ENCODE measurements at regions of chr10 and their contacts with region 1.

Region 1: GRCh38 chr10:3785257-3785850 is 345 bp upstream of the KLF6 start:
- DNase-seq: peak; percentile 100
- H3K4me3 ChIP-seq: peak overlapping the region; percentile 66 to 97 (median 87)
- H3K27ac ChIP-seq: peak overlapping the region; percentile 97 to 100 (median 99)
- H3K4me1 ChIP-seq: peaks cover 15 to 29% (median 23%) of the 10 kb centered on the region in 4 donors
- H3K27me3 ChIP-seq: no peaks in the 10 kb centered on the region
- CTCF ChIP-seq: no peak
- EP300 ChIP-seq: no peak
- POLR2A ChIP-seq: peak; percentile 99

Region 2: DNA sequence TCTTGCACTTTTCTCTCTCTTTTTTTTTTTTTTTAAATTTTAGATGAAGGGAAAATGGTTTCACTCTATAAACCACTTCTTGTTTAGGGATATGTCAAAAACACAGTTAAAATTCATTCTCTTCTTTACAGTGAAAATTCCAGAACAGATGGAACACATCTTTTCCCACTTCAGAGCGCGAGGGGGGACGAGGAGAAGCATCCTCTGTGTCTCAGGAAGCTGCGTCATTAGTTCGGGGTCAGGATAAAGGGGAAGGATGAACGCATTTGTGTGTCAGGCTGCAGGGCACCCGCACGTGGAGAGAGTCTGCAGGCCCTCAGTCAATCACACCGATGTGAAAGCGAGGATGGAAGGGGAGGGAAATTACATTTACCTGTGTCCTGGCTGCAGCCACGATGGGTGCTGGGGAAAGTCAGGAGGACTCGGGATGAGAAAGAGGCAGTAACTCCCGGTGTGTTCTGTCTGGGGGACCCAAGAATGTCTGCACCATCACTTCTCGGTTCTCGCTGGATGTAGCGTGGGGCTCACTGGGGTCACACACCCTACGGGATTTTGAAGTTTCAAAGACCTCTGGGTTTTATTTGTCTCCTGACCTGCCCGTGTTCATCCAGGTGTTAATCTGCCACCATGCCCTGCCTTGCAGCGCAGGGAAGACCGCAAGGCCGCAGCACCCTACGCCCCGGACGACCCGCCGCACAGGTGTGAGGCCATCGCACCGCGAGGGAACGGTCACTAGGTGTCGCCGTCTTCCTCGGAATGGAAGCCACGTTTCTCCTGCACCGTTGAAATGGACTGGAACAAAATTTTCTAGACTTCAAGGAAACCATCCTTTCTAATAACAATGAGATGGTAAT is 546.1 kb before region 1 on chr10:
- intact Hi-C with region 1: loop called (anchors 5 kb)
- DNase-seq: no peak
- H3K4me3 ChIP-seq: peak overlapping the region in 2 of 4 donors; percentile 3 to 18
- H3K27ac ChIP-seq: peak overlapping the region in 2 of 4 donors; percentile 60 to 63
- H3K4me1 ChIP-seq: peaks cover 6 to 11% (median 8%) of the 10 kb centered on the region in 4 donors
- H3K27me3 ChIP-seq: no peaks in the 10 kb centered on the region
- CTCF ChIP-seq: peak; percentile 88 to 95 (median 92)
- EP300 ChIP-seq: no peak
- POLR2A ChIP-seq: no peak

Region 3: GRCh38 chr10:3251172-3251571 is 534.2 kb before region 1 on chr10:
- intact Hi-C with region 1: no loop called
- DNase-seq: no peak
- H3K4me3 ChIP-seq: no peak overlapping the region
- H3K27ac ChIP-seq: no peak overlapping the region
- H3K4me1 ChIP-seq: peaks cover 3 to 22% (median 18%) of the 10 kb centered on the region in 4 donors
- H3K27me3 ChIP-seq: no peaks in the 10 kb centered on the region
- CTCF ChIP-seq: no peak
- EP300 ChIP-seq: no peak
- POLR2A ChIP-seq: no peak

Region 4: GRCh38 chr10:3554121-3554522 is 231.2 kb before region 1 on chr10:
- intact Hi-C with region 1: no loop called
- DNase-seq: no peak
- H3K4me3 ChIP-seq: no peak overlapping the region
- H3K27ac ChIP-seq: no peak overlapping the region
- H3K4me1 ChIP-seq: no peaks in the 10 kb centered on the region
- H3K27me3 ChIP-seq: no peaks in the 10 kb centered on the region
- CTCF ChIP-seq: no peak
- EP300 ChIP-seq: no peak
- POLR2A ChIP-seq: no peak

Region 5: GRCh38 chr10:3774018-3774813 is 11.1 kb before region 1 on chr10:
- intact Hi-C with region 1: no loop called
- DNase-seq: no peak
- H3K4me3 ChIP-seq: no peak overlapping the region
- H3K27ac ChIP-seq: peak overlapping the region; percentile 97 to 100 (median 99)
- H3K4me1 ChIP-seq: peaks cover 46 to 50% (median 47%) of the 10 kb centered on the region in 4 donors
- H3K27me3 ChIP-seq: no peaks in the 10 kb centered on the region
- CTCF ChIP-seq: no peak
- EP300 ChIP-seq: no peak
- POLR2A ChIP-seq: no peak

Region 6: GRCh38 chr10:3852147-3852904 is 67.0 kb after region 1 on chr10:
- intact Hi-C with region 1: loop called (anchors 5 kb)
- DNase-seq: no peak
- H3K4me3 ChIP-seq: no peak overlapping the region
- H3K27ac ChIP-seq: peak overlapping the region; percentile 83 to 89 (median 86)
- H3K4me1 ChIP-seq: peaks cover 25 to 43% (median 36%) of the 10 kb centered on the region in 4 donors
- H3K27me3 ChIP-seq: no peaks in the 10 kb centered on the region
- CTCF ChIP-seq: no peak
- EP300 ChIP-seq: peak; percentile 10
- POLR2A ChIP-seq: no peak

Region 7: GRCh38 chr10:3887885-3888476 is 102.6 kb after region 1 on chr10:
- intact Hi-C with region 1: loop called (anchors 1 kb)
- DNase-seq: no peak
- H3K4me3 ChIP-seq: peak overlapping the region in 3 of 4 donors; percentile 5 to 36 (median 19)
- H3K27ac ChIP-seq: peak overlapping the region; percentile 87 to 98 (median 92)
- H3K4me1 ChIP-seq: peaks cover 21 to 45% (median 38%) of the 10 kb centered on the region in 4 donors
- H3K27me3 ChIP-seq: no peaks in the 10 kb centered on the region
- CTCF ChIP-seq: no peak
- EP300 ChIP-seq: peak; percentile 100
- POLR2A ChIP-seq: no peak

Region 8: GRCh38 chr10:4241724-4242345 is 456.5 kb after region 1 on chr10:
- intact Hi-C with region 1: loop called (anchors 5 kb)
- DNase-seq: no peak
- H3K4me3 ChIP-seq: peak overlapping the region; percentile 46 to 60 (median 58)
- H3K27ac ChIP-seq: peak overlapping the region; percentile 89 to 92 (median 90)
- H3K4me1 ChIP-seq: peaks cover 7 to 70% (median 41%) of the 10 kb centered on the region in 4 donors
- H3K27me3 ChIP-seq: no peaks in the 10 kb centered on the region
- CTCF ChIP-seq: no peak
- EP300 ChIP-seq: peak; percentile 77
- POLR2A ChIP-seq: no peak

Region 9: GRCh38 chr10:4283846-4284610 is 498.7 kb after region 1 on chr10:
- intact Hi-C with region 1: loop called (anchors 10 kb)
- DNase-seq: peak; percentile 92
- H3K4me3 ChIP-seq: no peak overlapping the region
- H3K27ac ChIP-seq: peak overlapping the region; percentile 83 to 90 (median 90)
- H3K4me1 ChIP-seq: peaks cover 47 to 87% (median 74%) of the 10 kb centered on the region in 4 donors
- H3K27me3 ChIP-seq: no peaks in the 10 kb centered on the region
- CTCF ChIP-seq: peak in 1 of 3 experiments; percentile 21
- EP300 ChIP-seq: peak; percentile 94
- POLR2A ChIP-seq: no peak

Region 10: DNA sequence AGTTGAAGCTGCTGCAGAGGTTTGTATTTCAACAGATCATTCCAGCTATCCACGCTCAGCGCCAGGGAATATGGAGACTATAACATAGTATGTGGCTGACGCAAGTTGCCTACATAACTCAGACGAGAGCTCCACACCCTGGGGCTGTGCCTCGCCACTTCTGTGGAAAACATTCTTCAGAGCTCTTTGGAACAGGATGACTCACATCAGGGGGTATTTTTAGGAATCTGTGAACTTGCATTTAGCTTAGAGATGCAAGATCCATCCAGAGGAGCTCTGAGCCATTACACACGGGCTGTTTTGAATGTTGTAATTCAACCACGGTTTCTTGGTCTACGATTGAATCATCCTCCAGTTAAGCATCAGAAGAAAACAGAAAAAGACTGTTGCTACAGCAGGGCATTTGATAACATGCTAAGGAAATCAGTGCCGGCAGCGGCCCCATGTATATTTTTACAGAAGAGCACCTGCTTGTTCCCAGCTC is 559.2 kb after region 1 on chr10:
- intact Hi-C with region 1: loop called (anchors 10 kb)
- DNase-seq: no peak
- H3K4me3 ChIP-seq: peak overlapping the region in 1 of 4 donors; percentile 1
- H3K27ac ChIP-seq: peak overlapping the region; percentile 71 to 83 (median 78)
- H3K4me1 ChIP-seq: peaks cover 21 to 32% (median 31%) of the 10 kb centered on the region in 4 donors
- H3K27me3 ChIP-seq: no peaks in the 10 kb centered on the region
- CTCF ChIP-seq: peak in 1 of 3 experiments; percentile 40
- EP300 ChIP-seq: peak; percentile 78
- POLR2A ChIP-seq: no peak

Measured in esophagus muscularis mucosa (tissue), 4 donors.